Activated CD8-positive, alpha-beta T cell treated with anti-CD3 and anti-CD28 coated beads, Interleukin-2, amount 10 ng/mL, durations not matched to agents 7 days and 5 days (primary cell): ENCODE measurements at regions of chr10 and their contacts with region 1.

Region 1: DNA sequence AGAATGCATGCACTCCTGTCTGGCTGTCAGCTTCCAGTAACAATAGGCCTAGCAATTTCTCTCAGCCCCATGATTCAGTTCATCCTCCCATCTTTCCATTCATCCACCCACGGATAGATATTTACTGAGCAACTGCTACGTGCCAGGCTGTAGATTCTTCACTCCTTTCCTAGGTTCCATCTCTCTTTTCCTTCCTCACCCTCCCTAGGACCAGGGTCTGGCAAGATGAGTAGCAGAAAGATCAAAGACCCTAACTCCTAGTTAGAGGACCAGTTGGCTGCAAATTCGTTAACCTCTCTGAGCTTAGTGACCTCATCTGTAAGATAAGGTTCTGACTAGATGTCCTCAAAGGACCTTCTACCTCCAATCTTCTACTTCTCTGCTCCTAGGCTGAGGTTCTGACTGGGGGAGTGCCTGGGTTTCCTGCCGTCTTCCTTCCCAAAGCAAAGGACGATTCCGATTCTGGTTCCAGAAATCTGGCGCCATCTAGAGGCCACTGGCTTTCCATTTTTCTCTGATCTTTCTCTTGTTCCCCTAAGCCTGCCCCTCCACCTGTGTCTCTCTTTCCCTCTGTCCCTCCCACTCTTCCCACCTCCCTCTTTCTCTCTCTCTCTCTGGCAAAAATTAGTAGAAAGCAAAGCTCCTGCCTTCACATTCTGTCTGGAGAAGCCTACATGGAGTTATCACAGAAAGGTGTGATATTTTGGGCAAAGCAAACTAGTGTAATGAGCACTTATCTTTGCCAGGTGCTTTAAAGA is 26.2 kb downstream of the TBATA start:
- DNase-seq: peak; percentile 82
- ATAC-seq: peak; percentile 70
- H3K4me3 Mint-ChIP-seq: no peak overlapping the region
- H3K27ac Mint-ChIP-seq: peak overlapping the region; percentile 2
- H3K4me1 Mint-ChIP-seq: peaks cover 17% of the 10 kb centered on the region
- H3K27me3 Mint-ChIP-seq: peaks cover 3% of the 10 kb centered on the region

Region 2: DNA sequence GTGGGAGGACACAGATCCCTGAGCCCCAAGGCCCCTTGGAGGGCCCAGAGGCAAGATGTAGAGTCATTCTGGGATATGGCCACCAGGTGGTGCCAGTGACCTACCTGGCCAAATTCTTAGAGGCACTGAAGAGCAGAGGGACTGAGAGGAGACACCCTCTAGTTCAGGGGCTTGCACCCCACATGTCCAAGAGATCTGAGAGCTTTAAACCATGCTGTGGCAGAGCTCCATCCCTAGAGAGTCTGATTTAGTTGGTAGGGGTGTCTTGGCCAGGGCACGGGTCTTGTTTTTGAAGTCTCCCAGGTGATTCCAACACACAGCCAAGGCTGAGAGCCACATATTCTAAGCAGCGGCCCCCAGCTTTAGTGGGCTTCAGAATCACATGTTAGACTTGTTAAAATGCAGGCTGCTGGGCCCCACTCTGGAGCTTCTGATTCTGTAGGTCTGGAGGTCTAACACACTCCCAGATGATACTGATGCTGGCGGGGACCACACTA is 208.9 kb before region 1 on chr10:
- CTCF ChIA-PET with region 1: interaction called, 62 read pairs
- POLR2A ChIA-PET with region 1: no interaction called
- DNase-seq: peak; percentile 83
- ATAC-seq: peak; percentile 88
- H3K4me3 Mint-ChIP-seq: no peak overlapping the region
- H3K27ac Mint-ChIP-seq: peak overlapping the region; percentile 49
- H3K4me1 Mint-ChIP-seq: peaks cover 2% of the 10 kb centered on the region
- H3K27me3 Mint-ChIP-seq: no peaks in the 10 kb centered on the region

Region 3: GRCh38 chr10:70619271-70620019 is 139.5 kb before region 1 on chr10:
- CTCF ChIA-PET with region 1: interaction called, 15 read pairs
- POLR2A ChIA-PET with region 1: no interaction called
- DNase-seq: no peak
- ATAC-seq: no peak
- H3K4me3 Mint-ChIP-seq: no peak overlapping the region
- H3K27ac Mint-ChIP-seq: no peak overlapping the region
- H3K4me1 Mint-ChIP-seq: peaks cover 46% of the 10 kb centered on the region
- H3K27me3 Mint-ChIP-seq: no peaks in the 10 kb centered on the region

Region 4: DNA sequence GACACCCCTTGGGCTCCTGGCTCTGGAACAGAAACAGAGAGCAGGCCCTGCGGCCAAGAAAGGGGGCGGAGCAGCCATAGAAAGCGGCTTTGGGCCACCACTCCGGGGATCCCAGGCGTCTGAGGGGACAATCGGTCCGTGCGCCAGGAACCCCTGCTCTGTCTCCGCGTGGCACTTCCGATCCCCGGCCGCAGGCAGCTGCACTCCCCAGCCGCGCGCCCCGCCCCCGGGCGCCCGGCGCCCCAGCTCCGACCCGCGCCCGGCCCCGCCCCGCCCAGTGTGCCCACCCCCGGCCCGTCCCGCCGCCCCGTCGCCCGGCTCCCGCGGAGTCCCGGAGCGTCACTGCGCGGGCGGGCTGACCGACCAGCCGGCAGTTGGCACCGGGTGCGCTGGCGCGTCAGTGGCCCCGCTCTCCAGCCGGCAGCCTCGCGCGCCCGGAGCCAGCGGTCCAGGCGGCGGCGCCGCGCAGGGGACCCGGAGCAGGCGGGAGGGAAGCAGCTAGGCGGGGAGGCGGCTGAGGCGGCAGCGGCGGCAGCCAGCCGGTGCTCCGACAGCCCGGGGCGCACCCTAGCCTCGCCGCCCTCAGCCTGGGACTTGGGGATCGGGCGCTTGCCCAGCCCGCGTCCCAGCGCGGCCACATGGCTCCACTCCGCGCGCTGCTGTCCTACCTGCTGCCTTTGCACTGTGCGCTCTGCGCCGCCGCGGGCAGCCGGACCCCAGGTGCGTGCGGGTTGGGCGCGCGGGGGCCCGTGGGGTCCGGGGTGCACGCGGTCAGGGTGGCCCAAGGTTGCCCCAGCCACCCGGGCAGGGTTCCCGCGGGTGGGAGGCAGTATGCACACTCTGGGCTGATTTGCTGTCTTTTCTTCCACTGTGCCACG is 86.5 kb before region 1 on chr10 and contains the start of gene ADAMTS14:
- CTCF ChIA-PET with region 1: no interaction called
- POLR2A ChIA-PET with region 1: no interaction called
- DNase-seq: peak; percentile 36
- ATAC-seq: peak; percentile 74
- H3K4me3 Mint-ChIP-seq: peak within 1 kb of the TSS; percentile 42
- H3K27ac Mint-ChIP-seq: no peak within 1 kb of the TSS
- H3K4me1 Mint-ChIP-seq: peaks cover 10% of the 10 kb centered on the region
- H3K27me3 Mint-ChIP-seq: peaks cover 36% of the 10 kb centered on the region
- total RNA-seq, gene ADAMTS14: 0.05 TPM in 1 of 2 experiments, not detected in the other

Region 5: DNA sequence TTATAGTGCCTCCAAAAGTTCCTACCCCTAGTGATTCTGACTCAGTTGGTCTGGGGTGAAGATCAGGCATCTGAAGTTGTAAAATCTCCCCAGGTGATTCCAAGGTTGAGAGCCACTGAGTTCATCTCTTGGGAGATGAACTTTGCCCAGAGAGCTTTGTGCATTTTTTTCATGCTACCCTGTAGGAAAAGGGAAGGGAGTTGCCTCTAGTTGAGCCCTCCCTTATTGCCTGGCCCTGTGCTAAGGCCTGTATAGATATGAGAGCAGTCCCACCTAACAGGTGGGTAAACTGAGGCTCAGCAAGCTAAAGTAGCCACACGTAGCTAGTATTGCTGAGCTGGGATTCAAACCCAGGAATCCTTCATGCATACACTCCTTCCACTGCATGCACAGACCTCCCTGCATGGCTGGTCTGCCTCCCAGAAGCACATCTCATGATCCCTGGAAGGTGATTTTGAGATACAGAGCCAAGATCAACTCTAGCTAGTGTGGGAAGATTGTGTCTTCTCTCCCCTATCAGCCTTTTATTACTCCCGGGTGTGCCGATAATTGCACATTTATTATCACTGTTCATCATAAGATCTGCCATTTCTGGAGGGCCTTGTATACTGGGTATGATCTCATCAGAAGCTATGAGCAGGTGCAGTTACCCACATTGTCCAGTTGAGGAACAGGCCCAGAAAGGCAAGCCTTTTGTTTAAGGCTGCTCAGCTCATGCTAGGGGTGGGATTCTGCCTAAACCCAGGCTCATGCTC is 20.8 kb before region 1 on chr10:
- CTCF ChIA-PET with region 1: interaction called, 14 read pairs
- POLR2A ChIA-PET with region 1: no interaction called
- DNase-seq: no peak
- ATAC-seq: no peak
- H3K4me3 Mint-ChIP-seq: no peak overlapping the region
- H3K27ac Mint-ChIP-seq: no peak overlapping the region
- H3K4me1 Mint-ChIP-seq: peaks cover 19% of the 10 kb centered on the region
- H3K27me3 Mint-ChIP-seq: no peaks in the 10 kb centered on the region

Region 6: DNA sequence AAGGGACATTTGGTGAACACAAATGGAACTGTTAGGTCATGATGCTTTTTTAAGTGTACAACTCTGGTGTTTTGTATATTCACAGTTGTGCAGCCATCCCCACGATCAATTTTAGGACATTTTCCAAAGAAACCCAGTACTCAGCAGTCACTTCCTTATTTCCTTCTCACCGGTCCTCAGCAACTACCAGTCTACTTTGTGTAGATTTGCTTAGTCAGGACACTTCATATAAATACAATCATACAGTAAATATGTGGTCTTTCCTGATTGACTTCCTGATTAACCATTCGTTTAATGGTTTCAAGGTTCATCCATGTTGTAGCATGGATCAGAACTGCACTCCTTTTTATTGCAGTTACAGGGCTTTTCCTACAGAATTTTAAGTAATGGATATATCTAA is 71.2 kb after region 1 on chr10:
- CTCF ChIA-PET with region 1: no interaction called
- POLR2A ChIA-PET with region 1: no interaction called
- DNase-seq: no peak
- ATAC-seq: no peak
- H3K4me3 Mint-ChIP-seq: no peak overlapping the region
- H3K27ac Mint-ChIP-seq: no peak overlapping the region
- H3K4me1 Mint-ChIP-seq: peaks cover 7% of the 10 kb centered on the region
- H3K27me3 Mint-ChIP-seq: no peaks in the 10 kb centered on the region